Upper lobe of right lung (tissue), 1 donor: ENCODE measurements at regions of chr20 and their contacts with region 1.

Region 1: DNA sequence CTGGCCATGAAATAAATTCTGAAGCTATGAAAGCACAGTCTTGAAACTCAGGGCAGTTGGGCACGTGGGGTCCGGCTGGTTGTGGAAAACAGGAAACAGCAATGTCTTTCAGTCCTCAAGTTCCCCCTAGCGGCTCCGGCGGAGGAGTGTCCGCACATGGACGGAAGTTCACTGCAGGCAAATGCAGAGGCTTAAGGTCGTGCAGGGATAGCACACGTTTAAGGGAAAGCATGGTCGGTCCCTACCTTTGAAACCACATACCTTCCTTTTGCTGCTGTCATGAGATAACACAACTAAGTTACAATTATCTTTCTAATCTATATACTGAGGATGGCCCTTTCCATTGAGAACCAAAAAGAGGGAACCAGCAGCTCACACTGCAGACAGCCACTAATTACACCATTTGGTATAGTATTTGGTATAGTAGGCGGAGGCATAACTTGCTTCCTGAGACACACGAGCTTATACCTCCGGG is 52.6 kb upstream of the NFATC2 start:
- DNase-seq: peak; percentile 91
- ATAC-seq: peak; percentile 98
- H3K4me3 ChIP-seq: no peak overlapping the region
- H3K27ac ChIP-seq: no peak overlapping the region
- H3K4me1 ChIP-seq: peaks cover 10% of the 10 kb centered on the region
- H3K27me3 ChIP-seq: no peaks in the 10 kb centered on the region
- CTCF ChIP-seq: peak; percentile 89

Region 2: DNA sequence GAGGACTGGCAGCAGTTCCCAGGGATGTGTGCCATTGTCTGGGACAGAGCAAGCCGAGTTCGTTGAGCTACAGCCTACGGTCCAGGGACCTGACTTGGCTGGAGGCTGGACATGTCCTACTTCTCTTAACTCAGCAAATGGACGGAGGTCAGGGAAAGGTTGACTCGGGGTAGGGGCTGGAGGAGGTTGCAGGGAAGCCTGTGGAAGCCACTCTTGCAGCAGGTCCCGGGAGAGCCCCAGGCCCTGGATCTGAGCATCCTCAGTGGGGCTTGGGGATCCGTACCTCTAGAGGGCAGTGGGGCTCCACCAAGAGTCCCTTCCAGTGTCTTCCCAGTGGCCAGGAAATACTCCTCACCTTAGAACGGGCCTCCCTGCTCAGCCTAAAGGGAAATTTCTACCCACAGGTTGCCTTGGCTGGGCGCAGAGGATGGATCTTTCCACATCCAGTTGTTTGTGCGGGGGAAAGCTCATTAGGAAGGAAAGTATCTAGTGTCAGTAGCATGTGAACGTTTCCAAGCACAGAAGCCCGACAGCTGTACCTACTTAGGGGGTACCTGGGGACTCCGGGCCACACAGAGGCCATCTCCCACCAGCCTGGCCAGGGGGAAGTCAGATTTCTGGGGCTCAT is 222.8 kb before region 1 on chr20:
- intact Hi-C with region 1: loop called (anchors 10 kb)
- DNase-seq: peak; percentile 71
- ATAC-seq: peak; percentile 88
- H3K4me3 ChIP-seq: no peak overlapping the region
- H3K27ac ChIP-seq: no peak overlapping the region
- H3K4me1 ChIP-seq: peaks cover 7% of the 10 kb centered on the region
- H3K27me3 ChIP-seq: no peaks in the 10 kb centered on the region
- CTCF ChIP-seq: peak; percentile 77

Region 3: DNA sequence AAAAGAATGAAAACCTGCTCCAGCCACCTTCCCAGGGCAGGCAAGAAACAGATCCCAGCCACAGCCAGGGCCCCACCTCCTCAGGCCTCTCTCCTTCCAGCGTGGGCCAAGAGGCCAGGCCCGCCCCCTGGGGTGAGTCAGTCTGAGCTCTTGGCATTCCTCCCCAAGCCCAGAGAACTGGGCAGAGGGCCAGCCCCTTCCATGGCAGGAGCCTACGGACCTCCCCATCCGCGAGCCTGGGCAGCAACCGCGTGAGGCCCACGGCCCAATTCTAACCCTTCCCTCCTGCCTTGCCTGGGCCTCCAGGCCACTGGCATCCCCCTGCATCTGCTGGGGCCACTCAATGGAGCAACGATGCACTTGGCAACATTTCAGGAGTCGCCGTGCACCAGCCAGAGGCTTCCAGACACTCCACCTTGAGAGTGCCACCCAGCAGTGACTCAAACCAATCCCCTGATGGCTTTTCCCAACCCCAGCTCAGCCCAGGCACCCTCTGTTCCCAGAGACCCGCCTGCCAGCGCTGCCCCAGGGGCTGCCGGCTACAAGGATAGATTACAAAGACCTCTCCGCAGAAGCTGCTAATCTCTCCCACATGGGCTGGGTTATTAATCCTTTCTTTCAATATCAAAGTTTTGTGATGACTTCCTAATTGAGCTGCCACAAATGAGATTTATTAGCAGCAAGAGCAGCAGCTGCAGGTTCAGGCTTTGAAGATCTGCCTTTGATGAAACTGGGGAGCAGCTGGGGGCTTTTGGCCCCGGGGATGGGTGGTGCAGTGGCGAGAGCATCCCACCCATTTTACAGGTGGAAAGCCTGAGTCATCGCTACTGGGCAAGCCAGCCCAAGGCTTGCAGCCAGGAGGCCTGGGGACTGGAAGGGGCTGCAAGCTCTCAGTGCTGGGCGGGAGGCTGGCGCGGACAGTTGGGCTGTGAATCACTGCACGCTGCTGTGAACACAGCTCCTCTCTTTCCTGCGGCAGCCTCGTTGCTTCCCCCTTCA is 138.3 kb before region 1 on chr20:
- intact Hi-C with region 1: no loop called
- DNase-seq: peak; percentile 96
- ATAC-seq: peak; percentile 96
- H3K4me3 ChIP-seq: no peak overlapping the region
- H3K27ac ChIP-seq: peak overlapping the region; percentile 37
- H3K4me1 ChIP-seq: peaks cover 13% of the 10 kb centered on the region
- H3K27me3 ChIP-seq: no peaks in the 10 kb centered on the region
- CTCF ChIP-seq: no peak